Activated CD4-positive, alpha-beta T cell treated with anti-CD3 and anti-CD28 coated beads, Interleukin-2, amount 10 ng/mL, durations not matched to agents 24 days and 14 days (primary cell): ENCODE measurements at regions of chr4 and their contacts with region 1.

Region 1: GRCh38 chr4:139266583-139267257 is 13.3 kb downstream of the MGARP start:
- DNase-seq: peak; percentile 90
- H3K4me3 Mint-ChIP-seq: peak overlapping the region; percentile 68
- H3K27ac Mint-ChIP-seq: peak overlapping the region; percentile 78
- H3K4me1 Mint-ChIP-seq: peaks cover 21% of the 10 kb centered on the region
- H3K27me3 Mint-ChIP-seq: peaks cover 18% of the 10 kb centered on the region

Region 2: DNA sequence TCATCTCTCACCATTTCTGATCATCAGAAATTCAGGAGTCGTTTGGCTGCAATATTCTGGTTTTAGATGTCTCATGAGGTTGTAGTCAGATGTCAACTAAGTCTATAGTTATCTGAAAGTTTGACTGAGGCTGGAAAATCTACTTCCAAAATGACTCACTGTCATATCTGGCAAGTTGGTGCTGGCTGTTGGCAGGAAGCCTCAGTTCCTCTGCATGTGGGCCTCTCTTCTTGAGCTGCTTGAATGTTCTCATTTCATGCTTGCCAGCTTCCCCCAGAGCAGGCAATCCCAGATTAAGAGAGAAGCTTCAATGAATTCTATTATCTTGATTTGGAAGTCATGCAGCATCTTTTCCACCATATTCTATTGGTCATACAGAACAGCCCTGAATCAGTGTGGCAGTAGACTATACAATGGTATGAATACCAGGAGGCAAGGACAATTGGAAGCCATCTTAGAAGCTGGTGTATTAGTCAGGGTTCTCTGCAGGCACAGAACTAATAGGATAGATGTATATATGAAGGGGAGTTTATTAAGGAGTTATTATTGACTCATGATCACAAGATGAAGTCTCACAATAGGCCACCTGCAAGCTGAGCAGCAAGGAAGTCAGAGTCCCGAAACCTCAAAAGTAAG is 42.9 kb before region 1 on chr4:
- intact Hi-C with region 1: loop called (anchors 5 kb)
- DNase-seq: no peak
- H3K4me3 Mint-ChIP-seq: no peak overlapping the region
- H3K27ac Mint-ChIP-seq: peak overlapping the region; percentile 6
- H3K4me1 Mint-ChIP-seq: peaks cover 10% of the 10 kb centered on the region
- H3K27me3 Mint-ChIP-seq: no peaks in the 10 kb centered on the region

Region 3: GRCh38 chr4:139279760-139280620 is 13.3 kb after region 1 on chr4 and contains the start of gene MGARP:
- intact Hi-C with region 1: loop called (anchors 1 kb)
- DNase-seq: peak; percentile 70
- H3K4me3 Mint-ChIP-seq: peak within 1 kb of the TSS; percentile 79
- H3K27ac Mint-ChIP-seq: no peak within 1 kb of the TSS
- H3K4me1 Mint-ChIP-seq: peaks cover 19% of the 10 kb centered on the region
- H3K27me3 Mint-ChIP-seq: peaks cover 58% of the 10 kb centered on the region
- total RNA-seq, gene MGARP: 0.14 and 0.21 TPM in 2 replicates

Region 4: DNA sequence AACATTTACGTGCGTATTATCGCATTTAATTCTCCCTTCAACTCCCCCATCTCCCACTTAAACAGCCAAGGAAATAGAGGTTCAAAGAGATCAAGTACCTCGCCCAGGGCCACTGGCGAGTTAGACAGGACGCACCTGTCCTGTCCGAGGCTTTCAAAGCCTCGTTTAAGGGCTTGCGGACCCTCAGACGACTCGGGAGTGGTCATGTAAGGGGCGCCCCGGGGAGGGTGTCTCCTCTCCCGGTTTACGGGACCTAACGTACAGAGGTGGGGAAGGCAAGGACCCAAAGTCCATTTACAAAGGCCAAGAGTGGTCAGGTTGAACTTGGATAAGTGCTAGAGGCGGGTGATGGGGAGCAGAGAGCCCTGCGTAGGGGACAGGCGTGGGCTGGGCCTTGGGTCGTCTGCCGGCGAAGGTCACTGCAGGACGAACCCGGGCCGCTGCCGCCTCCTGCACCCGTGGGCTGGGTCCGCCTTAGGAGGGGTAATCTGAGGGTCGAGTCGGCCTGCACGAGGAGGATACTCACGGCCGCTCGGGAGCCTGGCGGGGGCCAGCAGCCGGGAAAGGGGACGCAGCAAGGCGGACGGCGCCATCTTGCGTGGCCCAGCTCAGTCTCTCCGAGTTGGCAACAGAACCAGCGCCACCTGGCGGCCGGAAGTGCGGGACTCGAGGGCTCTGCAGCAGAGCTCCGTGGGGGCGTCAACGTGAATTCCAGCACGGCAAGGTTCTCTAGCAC is 28.7 kb after region 1 on chr4:
- intact Hi-C with region 1: loop called (anchors 1 kb)
- DNase-seq: peak; percentile 99
- H3K4me3 Mint-ChIP-seq: peak overlapping the region; percentile 95
- H3K27ac Mint-ChIP-seq: peak overlapping the region; percentile 98
- H3K4me1 Mint-ChIP-seq: peaks cover 36% of the 10 kb centered on the region
- H3K27me3 Mint-ChIP-seq: no peaks in the 10 kb centered on the region

Region 5: GRCh38 chr4:139301113-139301820 is 34.5 kb after region 1 on chr4 and contains the start of gene NAA15:
- intact Hi-C with region 1: loop called (anchors 1 kb)
- DNase-seq: peak; percentile 99
- H3K4me3 Mint-ChIP-seq: peak within 1 kb of the TSS; percentile 99
- H3K27ac Mint-ChIP-seq: peak within 1 kb of the TSS; percentile 100
- H3K4me1 Mint-ChIP-seq: peaks cover 52% of the 10 kb centered on the region
- H3K27me3 Mint-ChIP-seq: no peaks in the 10 kb centered on the region
- total RNA-seq, gene NAA15: 114 and 115 TPM in 2 replicates